Heart left ventricle (tissue), 16 donors: ENCODE measurements at regions of chr17 and their contacts with region 1.

Region 1: GRCh38 chr17:49575579-49576087 is at the start of gene NXPH3:
- DNase-seq: peak; percentile 62 to 86 (median 77)
- ATAC-seq: peak; percentile 2 to 65 (median 33)
- H3K4me3 ChIP-seq: peak within 1 kb of the TSS; percentile 61 to 92 (median 68)
- H3K27ac ChIP-seq: peak within 1 kb of the TSS in 11 of 12 donors; percentile 13 to 89 (median 71)
- H3K4me1 ChIP-seq: peaks cover 4 to 45% (median 23%) of the 10 kb centered on the region in 12 donors
- H3K27me3 ChIP-seq: peaks cover 0 to 27% (median 0%) of the 10 kb centered on the region in 9 donors
- CTCF ChIP-seq: peak; percentile 18 to 84 (median 59)
- POLR2A ChIP-seq: no peak
- total RNA-seq, gene NXPH3: 2.5 to 6.8 (median 4.5) TPM

Region 2: GRCh38 chr17:49616601-49617131 is 41.0 kb after region 1 on chr17:
- intact Hi-C with region 1: loop called in 4 of 10 experiments (anchors 5 kb)
- DNase-seq: peak; percentile 69 to 86 (median 75)
- ATAC-seq: peak; percentile 75 to 91 (median 86)
- H3K4me3 ChIP-seq: peak overlapping the region in 1 of 12 donors; percentile 19
- H3K27ac ChIP-seq: peak overlapping the region in 11 of 12 donors; percentile 1 to 73 (median 54)
- H3K4me1 ChIP-seq: peaks cover 0 to 65% (median 39%) of the 10 kb centered on the region in 12 donors
- H3K27me3 ChIP-seq: no peaks in the 10 kb centered on the region
- CTCF ChIP-seq: peak in 1 of 12 donors; percentile 7
- POLR2A ChIP-seq: no peak

Region 3: GRCh38 chr17:49779739-49780231 is 204.2 kb after region 1 on chr17:
- intact Hi-C with region 1: loop called in 4 of 10 experiments (anchors 5 to 10 kb)
- DNase-seq: peak in 1 of 5 donors; percentile 36
- ATAC-seq: peak; percentile 28 to 67 (median 56)
- H3K4me3 ChIP-seq: no peak overlapping the region
- H3K27ac ChIP-seq: peak overlapping the region in 4 of 12 donors; percentile 8 to 38 (median 32)
- H3K4me1 ChIP-seq: peaks cover 0 to 58% (median 31%) of the 10 kb centered on the region in 12 donors
- H3K27me3 ChIP-seq: no peaks in the 10 kb centered on the region
- CTCF ChIP-seq: peak; percentile 31 to 74 (median 62)
- POLR2A ChIP-seq: no peak

Region 4: DNA sequence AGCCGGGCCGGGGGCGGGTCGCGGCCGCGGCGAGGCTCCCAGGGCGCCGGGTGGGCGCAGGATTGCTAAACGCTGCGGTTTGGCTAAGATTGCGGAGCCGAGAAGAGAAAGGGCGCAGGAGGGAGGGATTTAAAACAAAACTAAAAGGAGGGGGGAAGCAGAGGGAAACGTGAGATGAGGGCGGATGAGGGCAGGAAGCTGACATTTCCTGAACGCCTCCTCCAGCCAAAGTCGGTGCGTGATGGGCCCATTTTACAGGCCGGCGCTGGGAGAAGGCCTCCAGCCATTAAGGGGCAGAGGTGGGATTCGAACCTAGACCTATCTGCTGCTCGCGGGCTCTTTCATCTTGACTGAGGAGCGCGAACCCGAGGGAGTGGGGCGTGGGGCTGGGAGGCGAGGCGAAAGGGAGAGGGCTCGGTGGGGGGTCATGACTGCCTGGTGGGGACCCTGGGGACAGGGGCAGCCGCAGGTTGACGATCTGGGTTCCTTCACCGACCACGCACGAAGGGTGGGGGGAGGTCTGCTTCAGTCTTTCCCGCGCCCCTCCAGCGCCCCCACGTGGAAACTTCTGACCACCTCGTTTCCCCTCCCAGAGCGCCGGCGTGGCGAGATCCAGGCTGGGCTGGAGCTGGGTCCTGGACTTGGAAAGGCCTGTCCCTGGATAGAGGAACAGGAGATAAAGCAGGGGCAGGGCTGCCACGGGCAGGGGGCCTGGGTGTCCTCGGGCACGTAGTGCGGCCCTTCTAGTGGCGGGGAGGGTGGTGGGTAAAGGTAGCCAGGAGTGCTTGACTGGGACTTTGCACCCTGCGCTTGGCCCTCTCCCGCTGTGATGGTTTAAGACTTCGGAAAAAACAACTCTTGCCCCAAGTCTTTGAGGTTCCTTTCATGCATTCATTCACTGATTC is 276.0 kb after region 1 on chr17:
- intact Hi-C with region 1: loop called in 3 of 10 experiments (anchors 2 to 5 kb)
- DNase-seq: peak; percentile 81 to 89 (median 83)
- ATAC-seq: peak; percentile 65 to 88 (median 80)
- H3K4me3 ChIP-seq: peak overlapping the region; percentile 40 to 82 (median 64)
- H3K27ac ChIP-seq: peak overlapping the region in 9 of 12 donors; percentile 20 to 72 (median 58)
- H3K4me1 ChIP-seq: peaks cover 0 to 24% (median 13%) of the 10 kb centered on the region in 12 donors
- H3K27me3 ChIP-seq: no peaks in the 10 kb centered on the region
- CTCF ChIP-seq: peak; percentile 70 to 86 (median 77)
- POLR2A ChIP-seq: no peak